ENCODE measurements at regions of chr16 and their contacts with region 1.

Region 1: DNA sequence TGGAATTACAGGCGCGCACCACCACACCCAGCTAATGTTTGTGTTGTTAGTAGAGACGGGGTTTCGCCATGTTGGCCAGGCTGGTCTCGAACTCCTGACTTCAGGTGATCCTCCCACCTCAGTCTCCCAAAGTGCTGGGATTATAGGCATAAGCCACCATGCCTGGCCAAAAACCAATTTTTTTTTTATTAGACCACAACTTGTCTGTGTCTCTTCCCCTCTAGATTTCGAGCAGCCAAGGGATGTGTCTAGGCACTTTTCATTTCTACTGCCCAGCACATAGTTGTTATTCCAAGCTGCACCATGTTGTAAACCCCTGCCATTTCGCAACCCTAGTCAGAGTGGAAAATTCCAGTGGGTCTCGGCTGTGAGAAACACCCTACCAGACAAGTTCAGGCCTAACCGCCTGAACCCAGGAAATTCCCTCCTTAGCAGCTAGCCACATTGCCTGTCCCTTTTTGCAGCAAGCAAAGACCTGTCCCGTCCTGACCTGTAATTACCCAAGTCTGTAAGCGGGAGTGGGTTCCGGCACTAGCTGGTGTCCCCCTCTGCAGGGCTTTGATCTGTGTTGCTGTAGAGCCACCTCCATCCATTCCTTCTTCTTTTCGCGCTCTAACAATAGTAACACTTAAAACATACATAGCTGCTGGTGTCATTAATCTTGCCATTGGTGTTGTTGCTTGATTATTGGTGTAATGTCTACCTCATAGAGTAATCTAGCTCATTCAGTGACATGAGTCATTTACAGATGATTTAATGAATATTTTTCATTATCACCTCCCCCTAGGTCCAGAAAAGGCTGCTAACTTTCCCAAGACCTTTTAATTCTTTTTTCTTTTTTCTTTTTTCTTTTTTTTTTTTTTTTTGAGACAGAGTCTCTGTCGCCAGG is 77.3 kb upstream of the ATF7IP2 start:
- DNase-seq: no peak
- ATAC-seq: no peak
- H3K4me3 ChIP-seq: no peak overlapping the region
- H3K4me3 Mint-ChIP-seq: no peak overlapping the region
- H3K27ac ChIP-seq: no peak overlapping the region
- H3K27ac Mint-ChIP-seq: no peak overlapping the region
- H3K4me1 ChIP-seq: no peaks in the 10 kb centered on the region
- H3K4me1 Mint-ChIP-seq: no peaks in the 10 kb centered on the region
- H3K27me3 ChIP-seq: no peaks in the 10 kb centered on the region
- H3K27me3 Mint-ChIP-seq: no peaks in the 10 kb centered on the region

Region 2: DNA sequence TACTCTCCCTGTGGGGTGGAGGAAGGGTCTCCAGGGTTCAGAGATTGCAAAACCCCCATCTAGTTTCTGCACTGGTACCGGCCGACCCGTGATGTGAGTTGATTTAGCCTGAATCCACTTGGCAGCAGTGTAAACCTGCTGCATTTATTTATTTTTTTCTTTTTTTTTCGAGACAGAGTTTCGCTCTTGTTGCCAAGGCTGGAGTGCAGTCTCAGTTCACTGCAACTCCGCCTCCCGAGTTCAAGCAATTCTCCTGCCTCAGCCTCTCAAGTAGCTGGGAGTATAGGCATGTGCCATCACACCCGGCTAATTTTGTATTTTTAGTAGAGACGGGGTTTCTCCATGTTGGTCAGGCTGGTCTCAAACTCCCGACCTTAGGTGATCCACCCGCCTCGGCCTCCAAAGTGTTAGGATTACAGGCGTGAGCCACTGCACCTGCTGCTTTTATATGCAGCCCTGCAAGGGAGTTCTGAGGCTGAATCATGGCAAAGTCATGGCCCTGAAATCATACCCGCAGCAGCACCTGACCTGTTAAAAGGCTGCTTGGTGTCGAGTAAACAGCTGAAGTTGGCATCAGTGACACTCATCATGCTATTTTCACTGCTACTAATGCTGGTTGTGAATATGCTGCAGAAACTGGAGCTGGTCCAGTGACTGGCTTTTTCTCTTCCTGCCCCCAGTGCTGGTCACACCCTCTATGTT is 612.3 kb after region 1 on chr16:
- CTCF ChIA-PET with region 1: interaction called in 1 of 2 experiments, 13 read pairs
- POLR2A ChIA-PET with region 1: no interaction called
- DNase-seq: no peak
- ATAC-seq: no peak
- H3K4me3 ChIP-seq: no peak overlapping the region
- H3K4me3 Mint-ChIP-seq: no peak overlapping the region
- H3K27ac ChIP-seq: no peak overlapping the region
- H3K27ac Mint-ChIP-seq: no peak overlapping the region
- H3K4me1 ChIP-seq: peaks cover 0 to 7% of the 10 kb centered on the region in 2 experiments
- H3K4me1 Mint-ChIP-seq: peaks cover 0 to 4% (median 4%) of the 10 kb centered on the region in 3 donors
- H3K27me3 ChIP-seq: no peaks in the 10 kb centered on the region
- H3K27me3 Mint-ChIP-seq: no peaks in the 10 kb centered on the region

Region 3: GRCh38 chr16:12173121-12173520 is 1864.6 kb after region 1 on chr16:
- CTCF ChIA-PET with region 1: interaction called in 1 of 2 experiments, 10 read pairs
- POLR2A ChIA-PET with region 1: no interaction called
- DNase-seq: no peak
- ATAC-seq: no peak
- H3K4me3 ChIP-seq: no peak overlapping the region
- H3K4me3 Mint-ChIP-seq: no peak overlapping the region
- H3K27ac ChIP-seq: no peak overlapping the region
- H3K27ac Mint-ChIP-seq: no peak overlapping the region
- H3K4me1 ChIP-seq: no peaks in the 10 kb centered on the region
- H3K4me1 Mint-ChIP-seq: peaks cover 4 to 6% (median 6%) of the 10 kb centered on the region in 3 donors
- H3K27me3 ChIP-seq: no peaks in the 10 kb centered on the region
- H3K27me3 Mint-ChIP-seq: no peaks in the 10 kb centered on the region